ENCODE measurements at regions of chr12 and their contacts with region 1.

Region 1: GRCh38 chr12:53452159-53453077 is 516 bp downstream of the PCBP2 start:
- DNase-seq: peak; percentile 76
- H3K4me3 Mint-ChIP-seq: peak overlapping the region; percentile 100
- H3K27ac Mint-ChIP-seq: peak overlapping the region; percentile 99
- H3K4me1 Mint-ChIP-seq: peaks cover 44% of the 10 kb centered on the region
- H3K27me3 Mint-ChIP-seq: no peaks in the 10 kb centered on the region

Region 2: GRCh38 chr12:53441040-53441833 is 11.2 kb before region 1 on chr12 and contains the start of gene PRR13:
- CTCF ChIA-PET with region 1: interaction called, 10 read pairs
- POLR2A ChIA-PET with region 1: interaction called, 12 read pairs
- DNase-seq: peak; percentile 99
- H3K4me3 Mint-ChIP-seq: peak within 1 kb of the TSS; percentile 90
- H3K27ac Mint-ChIP-seq: peak within 1 kb of the TSS; percentile 88
- H3K4me1 Mint-ChIP-seq: peaks cover 43% of the 10 kb centered on the region
- H3K27me3 Mint-ChIP-seq: no peaks in the 10 kb centered on the region
- total RNA-seq, gene PRR13: 242 to 246 TPM

Region 3: DNA sequence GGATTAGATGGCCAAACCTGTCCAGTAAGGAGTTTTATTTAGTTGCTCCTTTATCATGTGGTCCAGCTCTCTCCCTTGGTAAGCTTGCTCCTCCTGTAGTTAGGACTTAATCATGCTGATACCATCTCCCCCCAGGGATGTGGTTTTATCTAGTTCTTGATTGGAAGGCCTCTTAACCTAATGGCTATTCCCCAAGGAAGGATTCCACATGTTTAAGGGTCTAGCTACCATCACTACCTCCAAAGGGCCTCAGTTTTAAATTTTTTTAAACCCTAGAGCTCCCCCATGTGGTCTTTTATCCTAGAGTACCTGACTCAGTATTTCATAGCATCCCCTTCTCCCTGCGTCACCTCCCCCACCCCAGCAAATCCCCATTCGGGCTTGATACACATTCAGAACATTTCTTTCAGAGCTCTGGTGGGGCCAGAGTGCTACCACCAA is 24.4 kb after region 1 on chr12:
- CTCF ChIA-PET with region 1: interaction called, 34 read pairs
- POLR2A ChIA-PET with region 1: interaction called, 281 read pairs
- DNase-seq: no peak
- H3K4me3 Mint-ChIP-seq: no peak overlapping the region
- H3K27ac Mint-ChIP-seq: peak overlapping the region; percentile 6
- H3K4me1 Mint-ChIP-seq: peaks cover 64% of the 10 kb centered on the region
- H3K27me3 Mint-ChIP-seq: no peaks in the 10 kb centered on the region

Region 4: GRCh38 chr12:53514628-53515290 is 62.3 kb after region 1 on chr12:
- CTCF ChIA-PET with region 1: no interaction called
- POLR2A ChIA-PET with region 1: no interaction called
- DNase-seq: no peak
- H3K4me3 Mint-ChIP-seq: no peak overlapping the region
- H3K27ac Mint-ChIP-seq: no peak overlapping the region
- H3K4me1 Mint-ChIP-seq: peaks cover 4% of the 10 kb centered on the region
- H3K27me3 Mint-ChIP-seq: no peaks in the 10 kb centered on the region

Region 5: GRCh38 chr12:53543539-53543938 is 91.1 kb after region 1 on chr12:
- CTCF ChIA-PET with region 1: no interaction called
- POLR2A ChIA-PET with region 1: no interaction called
- DNase-seq: peak; percentile 51
- H3K4me3 Mint-ChIP-seq: no peak overlapping the region
- H3K27ac Mint-ChIP-seq: no peak overlapping the region
- H3K4me1 Mint-ChIP-seq: peaks cover 9% of the 10 kb centered on the region
- H3K27me3 Mint-ChIP-seq: no peaks in the 10 kb centered on the region

Region 6: GRCh38 chr12:53591301-53592206 is 139.1 kb after region 1 on chr12:
- CTCF ChIA-PET with region 1: no interaction called
- POLR2A ChIA-PET with region 1: no interaction called
- DNase-seq: no peak
- H3K4me3 Mint-ChIP-seq: no peak overlapping the region
- H3K27ac Mint-ChIP-seq: no peak overlapping the region
- H3K4me1 Mint-ChIP-seq: peaks cover 18% of the 10 kb centered on the region
- H3K27me3 Mint-ChIP-seq: no peaks in the 10 kb centered on the region

Region 7: GRCh38 chr12:54411391-54412241 is 959.2 kb after region 1 on chr12:
- CTCF ChIA-PET with region 1: no interaction called
- POLR2A ChIA-PET with region 1: no interaction called
- DNase-seq: peak; percentile 75
- H3K4me3 Mint-ChIP-seq: peak overlapping the region; percentile 72
- H3K27ac Mint-ChIP-seq: peak overlapping the region; percentile 91
- H3K4me1 Mint-ChIP-seq: peaks cover 68% of the 10 kb centered on the region
- H3K27me3 Mint-ChIP-seq: no peaks in the 10 kb centered on the region